Head of caudate nucleus (tissue), 42 donors: ENCODE measurements at regions of chr9 and their contacts with region 1.

Region 1: DNA sequence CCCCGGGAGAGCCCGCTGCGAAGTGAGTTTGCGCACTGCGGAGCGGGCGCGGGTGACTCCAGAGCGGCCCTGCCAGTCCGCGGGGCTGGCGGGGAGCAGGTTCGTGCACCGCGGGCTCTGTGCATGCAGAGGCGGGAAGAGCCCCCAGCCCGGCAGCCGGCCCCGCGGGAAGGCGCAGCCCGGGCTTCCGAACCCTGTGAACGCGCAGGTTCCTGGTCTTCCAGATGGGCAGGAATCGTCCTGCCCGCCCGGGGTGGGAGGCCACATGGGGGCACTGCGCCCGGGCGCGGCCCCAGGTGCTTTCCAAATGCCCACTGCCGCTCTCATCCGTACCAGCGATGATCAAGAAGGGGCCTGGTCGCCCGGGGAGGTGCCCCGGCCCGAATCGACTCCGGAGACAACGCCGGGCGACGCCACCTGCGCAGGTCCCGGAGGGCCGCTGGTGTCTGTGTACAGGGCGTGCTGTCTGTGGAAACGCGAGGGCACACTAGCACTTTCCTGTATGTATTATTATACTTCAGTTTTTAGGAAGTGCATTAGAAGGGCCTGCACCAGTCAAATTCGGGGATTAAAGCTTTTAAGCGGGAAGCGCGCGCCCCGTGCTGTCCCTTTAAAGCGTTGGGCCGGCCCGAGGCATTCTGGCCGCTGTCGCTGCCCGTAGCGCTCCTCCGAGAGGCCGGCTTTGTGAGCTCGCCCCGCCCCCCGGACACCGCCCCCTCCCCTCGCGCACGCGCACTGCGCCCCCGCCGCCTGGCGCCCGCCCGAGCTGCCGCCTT is at the start of gene WDR5:
- DNase-seq: peak; percentile 82 to 97 (median 93)

Region 2: DNA sequence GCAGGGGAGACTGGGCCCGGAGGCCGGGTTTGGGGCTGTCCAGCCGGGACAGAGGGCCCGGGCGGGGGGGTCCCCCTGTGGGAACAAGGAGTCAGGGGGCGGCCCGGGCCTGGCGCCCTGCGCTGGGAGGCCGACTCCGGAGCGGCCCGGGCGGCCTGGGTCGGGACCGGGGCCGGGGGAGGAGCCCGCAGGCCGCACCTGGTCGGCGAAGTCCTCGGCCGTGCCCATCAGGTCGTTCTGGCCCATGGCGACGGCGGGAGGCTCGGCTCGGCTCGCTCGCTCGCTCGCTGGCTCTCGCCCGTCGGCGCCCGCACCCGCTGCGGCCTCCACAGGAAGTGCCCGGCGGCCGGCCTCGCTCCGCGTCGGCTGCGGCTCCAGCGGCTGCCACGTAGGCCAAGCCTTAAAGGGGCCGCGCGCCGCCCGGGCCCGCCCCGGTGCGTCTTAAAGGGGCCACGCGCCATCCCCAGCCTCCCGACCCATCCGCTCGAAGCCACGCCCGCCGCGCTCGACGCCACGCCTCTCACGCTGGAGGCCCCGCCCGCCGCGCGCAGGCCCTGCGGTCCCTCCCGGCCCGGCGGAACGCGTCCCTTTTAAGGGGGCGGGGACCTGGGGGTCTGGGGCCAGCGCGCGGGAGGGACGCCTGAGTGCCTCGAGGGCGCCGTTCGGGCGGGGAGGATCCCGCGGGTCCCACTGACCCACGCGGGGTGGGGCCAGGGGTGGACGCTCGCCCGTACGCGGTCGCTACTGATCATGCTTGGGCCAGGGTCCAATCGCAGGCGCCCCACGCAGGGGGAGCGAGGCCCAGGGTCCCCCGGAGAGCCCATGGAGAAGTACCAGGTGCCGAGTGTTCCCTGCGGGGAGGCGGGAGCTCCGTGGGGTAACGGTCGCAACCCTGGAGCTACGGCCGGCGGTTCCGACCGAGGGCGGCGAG is 759.5 kb before region 1 on chr9 and contains the starts of genes STKLD1 and SURF4:
- intact Hi-C with region 1: loop called (anchors 5 kb)
- DNase-seq: peak; percentile 91 to 99 (median 97)

Region 3: GRCh38 chr9:134067904-134068743 is 67.4 kb before region 1 on chr9 and contains the start of gene BRD3:
- intact Hi-C with region 1: loop called (anchors 5 kb)
- DNase-seq: peak; percentile 54 to 94 (median 87)

Region 4: DNA sequence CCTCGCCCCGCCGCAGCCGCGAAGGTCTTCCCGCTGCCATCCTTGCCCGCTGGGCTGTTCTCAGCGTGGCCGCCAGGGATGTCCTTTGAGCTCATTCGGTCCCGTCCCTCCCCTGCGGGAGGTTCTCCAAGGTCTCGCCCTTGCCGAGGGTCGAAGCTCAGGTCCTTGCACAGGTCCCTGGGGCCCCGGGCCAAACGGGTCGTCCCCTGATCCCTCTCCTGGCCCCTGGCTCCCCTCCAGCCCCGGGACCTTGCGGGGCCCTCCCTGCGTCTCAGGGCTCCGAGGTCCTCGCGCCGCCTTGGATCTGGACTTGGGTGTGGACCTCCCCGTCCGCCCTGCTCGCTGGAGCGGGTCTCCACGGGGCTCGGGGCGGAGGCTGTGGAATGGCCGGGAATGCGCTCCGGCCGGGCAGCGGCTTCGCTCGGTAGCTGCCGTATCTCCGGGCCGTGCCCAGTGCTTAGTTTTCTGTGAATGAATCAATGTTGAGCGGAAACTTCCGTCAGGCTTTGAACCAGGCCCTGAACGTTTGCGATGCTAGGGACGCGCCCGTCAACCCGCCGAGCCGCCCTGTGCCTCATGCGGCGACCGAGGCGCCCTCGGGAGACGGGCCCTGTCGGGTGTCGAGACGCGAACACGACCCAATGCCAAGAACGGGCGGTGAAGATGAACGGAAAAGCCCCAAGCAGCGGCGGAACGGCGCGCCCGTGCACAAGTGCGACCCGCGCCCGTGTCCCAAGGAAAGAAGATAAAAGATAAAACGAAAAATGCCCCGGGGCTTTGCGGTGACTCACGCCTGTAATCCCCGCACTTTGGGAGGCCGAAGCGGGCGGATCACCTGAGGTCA is 28.0 kb after region 1 on chr9:
- intact Hi-C with region 1: loop called (anchors 2 kb)
- DNase-seq: peak; percentile 35 to 85 (median 66)